ENCODE measurements at regions of chr18 and their contacts with region 1.

Region 1: GRCh38 chr18:59846814-59847490 is 52.8 kb upstream of the PMAIP1 start:
- DNase-seq: peak; percentile 61 to 70
- H3K4me3 ChIP-seq: no peak overlapping the region
- H3K27ac ChIP-seq: no peak overlapping the region
- H3K4me1 ChIP-seq: peaks cover 34% of the 10 kb centered on the region
- H3K27me3 ChIP-seq: no peaks in the 10 kb centered on the region
- CTCF ChIP-seq: no peak

Region 2: DNA sequence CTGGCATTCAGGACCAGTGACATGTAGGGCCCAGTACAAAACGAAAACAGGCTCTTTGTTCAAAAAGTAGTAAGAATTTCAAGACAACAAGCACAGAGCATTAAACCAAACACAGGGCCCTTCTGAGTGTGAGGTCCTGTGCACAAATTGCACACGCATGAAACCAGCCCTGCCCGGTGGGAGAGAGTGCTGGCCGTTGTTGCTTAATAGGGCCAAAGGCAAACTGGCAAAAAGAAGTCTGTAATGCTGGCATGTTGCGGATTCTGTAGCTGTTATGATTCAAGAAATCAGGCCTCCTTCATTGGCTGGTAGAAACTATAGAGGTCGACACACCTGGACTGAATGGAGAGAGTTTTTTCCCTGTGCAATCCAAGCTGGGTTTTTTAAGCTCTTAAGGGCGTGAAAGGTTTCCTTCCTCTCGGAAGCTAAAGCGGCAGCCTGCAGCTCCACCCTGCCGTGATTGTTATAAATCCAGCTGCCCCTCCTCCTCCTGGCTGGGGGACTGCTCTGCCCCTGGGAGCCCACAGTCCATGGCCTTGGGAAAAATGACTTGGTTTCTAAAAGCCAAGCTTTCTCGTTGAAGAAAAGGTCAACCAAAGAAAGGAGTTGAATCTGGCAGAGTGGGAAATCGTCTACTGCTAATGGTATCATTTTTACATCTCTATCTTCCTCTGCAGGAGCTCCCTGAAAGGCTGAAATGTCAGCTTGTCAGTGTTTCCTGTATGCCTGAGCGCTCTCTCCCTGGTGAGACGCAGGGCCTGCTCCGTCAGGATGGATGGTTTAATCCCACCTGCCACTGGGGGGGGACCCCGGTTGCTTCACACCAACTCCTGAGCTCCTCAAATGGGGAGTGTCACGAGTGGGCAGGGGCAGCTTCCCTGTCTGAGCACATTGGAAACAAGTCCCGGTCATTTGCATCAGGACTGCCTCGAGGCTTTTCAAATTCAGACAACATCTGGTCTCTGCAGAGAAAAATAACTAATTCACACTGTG is 1361.7 kb before region 1 on chr18:
- CTCF ChIA-PET with region 1: no interaction called
- POLR2A ChIA-PET with region 1: no interaction called
- intact Hi-C with region 1: no loop called
- DNase-seq: no peak
- H3K4me3 ChIP-seq: no peak overlapping the region
- H3K27ac ChIP-seq: no peak overlapping the region
- H3K4me1 ChIP-seq: no peaks in the 10 kb centered on the region
- H3K27me3 ChIP-seq: no peaks in the 10 kb centered on the region; the same call in 1 of the 2 replicates
- CTCF ChIP-seq: no peak

Region 3: GRCh38 chr18:58624011-58624410 is 1222.9 kb before region 1 on chr18:
- CTCF ChIA-PET with region 1: no interaction called
- POLR2A ChIA-PET with region 1: no interaction called
- intact Hi-C with region 1: no loop called
- DNase-seq: no peak
- H3K4me3 ChIP-seq: no peak overlapping the region
- H3K27ac ChIP-seq: no peak overlapping the region
- H3K4me1 ChIP-seq: no peaks in the 10 kb centered on the region
- H3K27me3 ChIP-seq: no peaks in the 10 kb centered on the region
- CTCF ChIP-seq: no peak

Region 4: GRCh38 chr18:59681521-59682004 is 165.4 kb before region 1 on chr18:
- CTCF ChIA-PET with region 1: no interaction called
- POLR2A ChIA-PET with region 1: no interaction called
- intact Hi-C with region 1: no loop called
- DNase-seq: no peak
- H3K4me3 ChIP-seq: no peak overlapping the region
- H3K27ac ChIP-seq: no peak overlapping the region
- H3K4me1 ChIP-seq: no peaks in the 10 kb centered on the region
- H3K27me3 ChIP-seq: no peaks in the 10 kb centered on the region
- CTCF ChIP-seq: no peak

Region 5: DNA sequence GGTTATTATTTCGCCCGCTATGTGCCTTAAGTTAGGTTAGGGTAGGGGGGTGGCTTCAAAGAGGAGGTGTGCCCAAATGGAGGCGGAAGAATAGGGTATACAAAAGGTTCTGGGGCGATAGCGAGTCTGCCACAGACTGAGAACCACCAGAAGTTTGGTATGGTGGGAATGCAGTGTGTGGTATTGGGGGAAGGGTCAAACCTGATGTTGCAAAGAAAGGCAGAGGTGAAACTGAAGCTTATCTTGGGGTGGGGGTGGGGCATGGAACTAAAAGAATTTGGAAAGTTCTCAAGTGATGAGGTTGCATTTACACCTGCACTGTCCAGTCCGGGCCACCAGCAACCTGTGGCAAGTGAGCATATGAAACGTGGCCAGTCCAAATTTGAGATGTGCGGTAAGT is 138.0 kb before region 1 on chr18:
- CTCF ChIA-PET with region 1: no interaction called
- POLR2A ChIA-PET with region 1: interaction called, 19 read pairs
- intact Hi-C with region 1: no loop called
- DNase-seq: no peak
- H3K4me3 ChIP-seq: no peak overlapping the region
- H3K27ac ChIP-seq: no peak overlapping the region
- H3K4me1 ChIP-seq: peaks cover 33% of the 10 kb centered on the region
- H3K27me3 ChIP-seq: no peaks in the 10 kb centered on the region
- CTCF ChIP-seq: no peak

Region 6: GRCh38 chr18:59881728-59882656 is 35.0 kb after region 1 on chr18:
- CTCF ChIA-PET with region 1: no interaction called
- POLR2A ChIA-PET with region 1: no interaction called
- intact Hi-C with region 1: loop called (anchors 5 kb)
- DNase-seq: peak; percentile 50 to 75
- H3K4me3 ChIP-seq: peak overlapping the region; percentile 22; the same call in 1 of the 2 replicates
- H3K27ac ChIP-seq: peak overlapping the region; percentile 90
- H3K4me1 ChIP-seq: peaks cover 52% of the 10 kb centered on the region
- H3K27me3 ChIP-seq: no peaks in the 10 kb centered on the region
- CTCF ChIP-seq: no peak

Region 7: DNA sequence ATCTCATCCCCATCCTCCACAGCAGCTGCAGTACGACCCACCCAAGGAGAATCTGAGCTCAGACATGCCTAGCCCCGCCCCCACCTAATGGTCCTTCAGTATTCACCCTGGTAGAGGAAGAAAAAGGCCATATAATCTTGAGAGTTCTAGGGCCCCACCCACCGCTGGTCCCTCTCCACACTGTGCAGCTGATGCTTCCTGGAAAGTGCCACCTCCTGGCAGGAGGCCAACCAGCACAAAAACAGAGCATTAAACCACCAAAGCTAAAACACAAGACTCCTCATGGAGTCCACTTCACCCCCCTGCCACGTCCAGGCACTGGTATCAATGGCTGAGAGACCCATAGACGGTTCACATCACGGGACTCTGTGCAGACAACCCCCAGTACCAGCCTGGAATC is 484.9 kb after region 1 on chr18:
- CTCF ChIA-PET with region 1: no interaction called
- POLR2A ChIA-PET with region 1: no interaction called
- intact Hi-C with region 1: no loop called
- DNase-seq: no peak
- H3K4me3 ChIP-seq: no peak overlapping the region
- H3K27ac ChIP-seq: no peak overlapping the region
- H3K4me1 ChIP-seq: no peaks in the 10 kb centered on the region
- H3K27me3 ChIP-seq: no peaks in the 10 kb centered on the region
- CTCF ChIP-seq: no peak